ENCODE measurements at regions of chr5 and their contacts with region 1.

Region 1: GRCh38 chr5:51172903-51173626 is 210.2 kb upstream of the ISL1 start:
- DNase-seq: no peak
- ATAC-seq: no peak
- H3K4me3 ChIP-seq: no peak overlapping the region
- H3K4me3 Mint-ChIP-seq: no peak overlapping the region
- H3K27ac ChIP-seq: no peak overlapping the region
- H3K27ac Mint-ChIP-seq: no peak overlapping the region
- H3K4me1 ChIP-seq: no peaks in the 10 kb centered on the region
- H3K4me1 Mint-ChIP-seq: no peaks in the 10 kb centered on the region
- H3K27me3 ChIP-seq: no peaks in the 10 kb centered on the region
- H3K27me3 Mint-ChIP-seq: no peaks in the 10 kb centered on the region
- CTCF ChIP-seq: no peak

Region 2: GRCh38 chr5:51148437-51148836 is 24.6 kb before region 1 on chr5:
- CTCF ChIA-PET with region 1: no interaction called
- POLR2A ChIA-PET with region 1: no interaction called
- intact Hi-C with region 1: loop called in 1 of 2 experiments (anchors 1 kb)
- DNase-seq: no peak
- ATAC-seq: no peak
- H3K4me3 ChIP-seq: no peak overlapping the region
- H3K4me3 Mint-ChIP-seq: no peak overlapping the region
- H3K27ac ChIP-seq: no peak overlapping the region
- H3K27ac Mint-ChIP-seq: no peak overlapping the region
- H3K4me1 ChIP-seq: no peaks in the 10 kb centered on the region
- H3K4me1 Mint-ChIP-seq: no peaks in the 10 kb centered on the region
- H3K27me3 ChIP-seq: no peaks in the 10 kb centered on the region
- H3K27me3 Mint-ChIP-seq: no peaks in the 10 kb centered on the region
- CTCF ChIP-seq: no peak

Measured in CD8-positive, alpha-beta T cell (primary cell).